ENCODE measurements at regions of chr7 and their contacts with region 1.

Region 1: GRCh38 chr7:124101173-124101768 is 68.4 kb upstream of the TMEM229A start:
- DNase-seq: peak; percentile 17
- H3K4me3 ChIP-seq: no peak overlapping the region
- H3K27ac ChIP-seq: no peak overlapping the region
- H3K4me1 ChIP-seq: no peaks in the 10 kb centered on the region
- CTCF ChIP-seq: peak; percentile 79

Region 2: DNA sequence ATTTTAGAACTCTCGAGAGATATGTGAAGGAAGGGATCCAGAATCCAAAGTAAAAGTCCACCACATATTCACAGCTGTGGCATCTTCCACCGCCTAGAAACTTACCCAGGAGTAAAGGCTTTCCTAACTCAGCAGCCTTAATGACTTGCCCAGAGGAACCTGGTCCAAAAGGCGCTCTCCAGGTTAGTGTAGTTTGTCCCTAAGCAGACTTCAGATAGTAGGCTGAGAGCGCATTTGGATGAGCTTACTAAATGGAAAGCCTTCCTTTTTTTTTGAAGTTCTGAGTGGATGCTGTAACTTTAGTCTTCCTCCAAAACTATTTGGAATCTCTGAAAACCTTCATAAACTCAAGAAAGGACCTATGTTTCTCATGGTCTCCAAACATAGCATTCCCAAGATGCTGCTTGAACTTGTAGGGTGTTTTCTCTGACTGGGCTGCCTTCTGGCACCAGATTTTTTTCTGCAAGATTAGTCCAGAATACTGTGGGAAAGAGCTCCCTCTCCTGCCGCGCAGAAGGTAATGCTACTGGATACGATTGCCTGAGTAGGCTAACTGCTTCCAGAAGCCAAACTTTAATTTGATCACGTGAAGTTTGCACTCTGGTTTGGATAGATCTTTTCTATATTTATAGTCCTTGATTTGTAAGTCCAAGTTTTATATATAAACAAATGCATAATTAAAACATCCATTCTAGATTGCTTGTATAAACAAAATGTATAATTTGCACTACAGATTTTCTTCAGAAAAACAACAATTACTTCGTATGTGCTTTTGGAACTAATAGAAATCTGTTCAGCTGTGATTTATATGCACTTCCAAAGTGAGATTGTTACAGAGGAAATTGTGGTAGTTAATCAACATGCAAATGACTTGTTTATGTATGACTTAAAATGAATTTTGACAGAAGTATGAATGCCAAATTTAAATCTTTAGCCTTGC is 683.9 kb after region 1 on chr7:
- CTCF ChIA-PET with region 1: no interaction called
- POLR2A ChIA-PET with region 1: no interaction called
- intact Hi-C with region 1: loop called (anchors 2 kb)
- DNase-seq: peak; percentile 38
- H3K4me3 ChIP-seq: no peak overlapping the region
- H3K27ac ChIP-seq: no peak overlapping the region
- H3K4me1 ChIP-seq: no peaks in the 10 kb centered on the region
- CTCF ChIP-seq: peak; percentile 87

Measured in OCI-LY7 (cell line).